Activated CD4-positive, alpha-beta T cell treated with anti-CD3 and anti-CD28 coated beads for 36 hours (primary cell): ENCODE measurements at regions of chr10 and their contacts with region 1.

Region 1: DNA sequence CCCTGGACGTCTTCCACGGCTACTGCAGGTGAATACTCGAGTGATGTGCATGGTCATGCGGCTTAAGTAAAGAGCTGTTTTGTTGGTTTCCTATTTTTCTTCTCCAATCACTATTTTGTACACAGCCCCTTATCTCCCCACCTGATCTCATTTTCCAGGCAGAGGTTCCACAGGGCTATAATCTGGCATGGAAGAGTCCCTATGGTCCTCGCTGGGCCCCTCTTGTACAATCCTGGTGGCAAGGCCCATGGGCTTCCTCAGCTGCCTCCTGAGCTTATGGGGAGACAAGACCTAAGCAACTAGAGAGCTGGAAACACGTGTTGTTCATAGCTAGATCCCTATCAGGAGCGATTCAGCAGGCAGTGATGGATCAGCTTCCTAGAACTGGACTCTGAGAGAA is 181.3 kb upstream of the ADO start:
- DNase-seq: no peak
- ATAC-seq: no peak
- H3K4me3 Mint-ChIP-seq: no peak overlapping the region
- H3K27ac Mint-ChIP-seq: no peak overlapping the region
- H3K4me1 Mint-ChIP-seq: peaks cover 14% of the 10 kb centered on the region
- H3K27me3 Mint-ChIP-seq: peaks cover 4% of the 10 kb centered on the region

Region 2: GRCh38 chr10:62637249-62638061 is 14.2 kb after region 1 on chr10:
- CTCF ChIA-PET with region 1: interaction called, 10 read pairs
- POLR2A ChIA-PET with region 1: no interaction called
- intact Hi-C with region 1: no loop called
- DNase-seq: peak; percentile 82
- ATAC-seq: peak; percentile 95
- H3K4me3 Mint-ChIP-seq: no peak overlapping the region
- H3K27ac Mint-ChIP-seq: no peak overlapping the region
- H3K4me1 Mint-ChIP-seq: peaks cover 21% of the 10 kb centered on the region
- H3K27me3 Mint-ChIP-seq: no peaks in the 10 kb centered on the region